ENCODE measurements at regions of chr5 and their contacts with region 1.

Region 1: GRCh38 chr5:59660737-59661136 is 232.8 kb downstream of the PDE4D start:
- DNase-seq: no peak
- H3K4me3 ChIP-seq: no peak overlapping the region
- H3K27ac ChIP-seq: no peak overlapping the region
- H3K4me1 ChIP-seq: no peaks in the 10 kb centered on the region
- H3K27me3 ChIP-seq: no peaks in the 10 kb centered on the region
- CTCF ChIP-seq: peak; percentile 23 to 59

Region 2: GRCh38 chr5:59390074-59390659 is 270.6 kb before region 1 on chr5:
- CTCF ChIA-PET with region 1: no interaction called
- dilution Hi-C with region 1: no loop called
- in situ Hi-C with region 1: loop called in 1 of 2 experiments (anchors 25 kb)
- intact Hi-C with region 1: loop called (anchors 1 kb)
- DNase-seq: no peak
- H3K4me3 ChIP-seq: no peak overlapping the region
- H3K27ac ChIP-seq: no peak overlapping the region
- H3K4me1 ChIP-seq: no peaks in the 10 kb centered on the region
- H3K27me3 ChIP-seq: no peaks in the 10 kb centered on the region
- CTCF ChIP-seq: peak; percentile 53 to 68